ENCODE measurements at regions of chr16 and their contacts with region 1.

Region 1: DNA sequence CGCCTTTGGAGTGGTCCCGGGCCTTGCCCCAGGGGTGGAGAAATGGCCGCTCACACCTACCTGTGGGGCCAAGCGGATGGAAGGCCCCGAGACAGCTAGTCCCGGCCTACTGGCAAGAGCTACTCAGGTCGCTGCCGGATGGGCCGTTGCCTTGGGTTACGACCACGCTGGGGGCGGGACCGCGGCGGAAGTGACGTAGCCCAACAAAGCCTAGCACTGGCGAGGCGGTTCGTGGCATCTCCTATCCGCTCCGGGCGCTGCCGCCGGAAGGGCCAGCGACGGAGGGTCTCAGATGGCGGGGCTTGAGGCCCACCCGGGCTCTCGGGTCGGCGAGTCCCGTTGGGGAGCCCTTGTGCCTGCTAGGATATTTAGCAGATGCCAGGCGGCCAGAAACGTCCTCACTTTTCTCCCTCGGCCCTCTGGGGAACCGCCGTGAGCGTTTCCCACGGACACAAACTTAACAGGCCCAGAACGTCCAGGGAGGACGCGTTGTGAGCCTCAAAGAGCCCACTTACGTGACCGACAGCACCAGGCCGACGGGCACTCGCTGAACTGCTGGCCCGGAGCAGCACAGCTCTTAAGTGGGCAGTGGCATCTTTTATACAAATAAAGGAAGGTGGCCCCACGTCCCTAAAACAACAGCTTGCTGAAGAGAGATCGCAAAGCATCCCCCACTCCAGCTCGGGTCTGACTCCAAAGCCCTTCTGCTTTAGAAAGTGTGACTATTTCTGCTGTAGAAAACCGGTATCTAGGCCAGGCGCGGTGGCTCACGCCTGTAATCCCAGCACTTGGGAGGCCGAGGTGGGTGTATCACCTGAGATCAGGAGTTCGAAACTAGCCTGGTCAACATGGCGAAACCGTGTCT is at the start of gene C16orf46:
- DNase-seq: peak; percentile 100
- H3K4me3 ChIP-seq: peak within 1 kb of the TSS; percentile 75 to 98 (median 89)
- H3K27ac ChIP-seq: peak within 1 kb of the TSS; percentile 87 to 98 (median 95)
- H3K4me1 ChIP-seq: peaks cover 0 to 14% (median 11%) of the 10 kb centered on the region in 6 donors
- H3K27me3 ChIP-seq: no peaks in the 10 kb centered on the region
- CTCF ChIP-seq: peak in 2 of 11 experiments; percentile 5 to 18
- POLR2A ChIP-seq: peak in 2 of 3 donors; percentile 57 to 63
- total RNA-seq, gene C16orf46: 0.91 to 1.1 (median 1.1) TPM in 3 of 7 donors, not detected in the others

Region 2: GRCh38 chr16:81035398-81035974 is 41.8 kb before region 1 on chr16 and contains the start of gene ATMIN:
- intact Hi-C with region 1: loop called (anchors 5 kb)
- DNase-seq: peak; percentile 97
- H3K4me3 ChIP-seq: peak within 1 kb of the TSS; percentile 64 to 93 (median 73)
- H3K27ac ChIP-seq: peak within 1 kb of the TSS in 7 of 8 donors; percentile 63 to 91 (median 84)
- H3K4me1 ChIP-seq: peaks cover 13 to 46% (median 28%) of the 10 kb centered on the region in 6 donors
- H3K27me3 ChIP-seq: no peaks in the 10 kb centered on the region
- CTCF ChIP-seq: peak; percentile 75 to 98 (median 96)
- POLR2A ChIP-seq: no peak
- total RNA-seq, gene ATMIN: 21.0 to 34.3 (median 29.0) TPM

Measured in spleen (tissue), 13 donors.